ENCODE measurements at regions of chr1 and their contacts with region 1.

Region 1: GRCh38 chr1:71049951-71050598 is 2.5 kb upstream of the PTGER3 start:
- DNase-seq: no peak
- H3K4me3 Mint-ChIP-seq: no peak overlapping the region
- H3K27ac Mint-ChIP-seq: no peak overlapping the region
- H3K4me1 Mint-ChIP-seq: peaks cover 18% of the 10 kb centered on the region
- H3K27me3 Mint-ChIP-seq: peaks cover 49% of the 10 kb centered on the region

Region 2: GRCh38 chr1:70685300-70686241 is 364.5 kb before region 1 on chr1:
- CTCF ChIA-PET with region 1: interaction called, 28 read pairs
- DNase-seq: peak; percentile 57
- H3K4me3 Mint-ChIP-seq: no peak overlapping the region
- H3K27ac Mint-ChIP-seq: no peak overlapping the region
- H3K4me1 Mint-ChIP-seq: no peaks in the 10 kb centered on the region
- H3K27me3 Mint-ChIP-seq: peaks cover 5% of the 10 kb centered on the region

Region 3: DNA sequence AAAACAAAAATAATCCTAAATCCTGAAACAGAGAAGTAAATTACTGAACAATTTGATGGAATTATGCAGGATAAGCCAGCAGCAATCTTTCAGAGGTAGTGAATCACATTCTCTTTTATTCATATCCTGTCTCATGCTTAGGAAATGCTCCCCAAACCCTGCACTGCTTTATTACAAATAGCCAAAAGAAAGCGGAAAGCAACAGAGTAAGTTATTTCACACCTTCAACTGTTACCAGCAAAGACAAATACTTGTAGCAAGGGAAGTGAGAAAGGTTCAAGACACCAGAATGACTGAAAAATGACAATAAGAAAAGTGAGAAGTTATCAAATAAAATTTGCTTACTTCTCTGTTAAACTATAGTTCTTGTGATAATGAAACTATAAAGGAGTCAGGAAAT is 24.6 kb after region 1 on chr1:
- CTCF ChIA-PET with region 1: no interaction called
- DNase-seq: no peak
- H3K4me3 Mint-ChIP-seq: no peak overlapping the region
- H3K27ac Mint-ChIP-seq: peak overlapping the region; percentile 72
- H3K4me1 Mint-ChIP-seq: peaks cover 37% of the 10 kb centered on the region
- H3K27me3 Mint-ChIP-seq: no peaks in the 10 kb centered on the region

Region 4: DNA sequence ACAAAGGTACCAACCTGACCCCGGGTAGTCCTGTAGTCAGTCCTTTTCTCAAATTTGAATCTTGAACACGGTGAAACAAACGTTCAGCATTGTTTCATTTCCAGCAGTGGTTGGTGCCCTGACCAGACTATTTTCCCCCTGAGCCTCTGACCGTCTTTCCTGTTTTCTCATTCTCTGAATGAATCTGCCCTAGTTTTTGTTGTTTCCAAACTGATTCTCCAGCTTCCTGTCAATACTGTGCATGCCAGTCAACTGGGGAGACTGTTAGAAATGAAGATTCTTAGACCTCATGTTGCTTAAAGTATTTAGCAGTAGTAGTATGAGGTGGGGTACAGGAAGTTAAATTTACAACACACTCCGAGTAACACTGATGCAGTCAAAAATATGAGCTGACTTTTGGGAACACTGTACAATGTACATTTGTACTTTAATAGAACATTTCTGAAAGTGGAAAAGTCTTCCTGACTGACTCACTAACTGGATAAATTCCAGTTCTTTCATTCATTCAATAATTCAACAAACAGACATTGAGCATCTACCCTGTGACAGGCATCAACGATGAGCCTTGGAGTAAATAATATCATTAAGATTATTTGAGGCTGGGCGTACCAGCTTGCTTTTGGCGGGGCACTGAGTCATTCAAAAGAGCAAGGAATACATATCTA is 56.7 kb after region 1 on chr1:
- CTCF ChIA-PET with region 1: no interaction called
- DNase-seq: no peak
- H3K4me3 Mint-ChIP-seq: no peak overlapping the region
- H3K27ac Mint-ChIP-seq: no peak overlapping the region
- H3K4me1 Mint-ChIP-seq: no peaks in the 10 kb centered on the region
- H3K27me3 Mint-ChIP-seq: no peaks in the 10 kb centered on the region

Measured in activated naive CD4-positive, alpha-beta T cell treated with anti-CD3 and anti-CD28 coated beads, Interleukin-2, amount 10 ng/mL, durations not matched to agents 7 days and 5 days (primary cell).